Naive thymus-derived CD4-positive, alpha-beta T cell (primary cell): ENCODE measurements at regions of chr18 and their contacts with region 1.

Region 1: DNA sequence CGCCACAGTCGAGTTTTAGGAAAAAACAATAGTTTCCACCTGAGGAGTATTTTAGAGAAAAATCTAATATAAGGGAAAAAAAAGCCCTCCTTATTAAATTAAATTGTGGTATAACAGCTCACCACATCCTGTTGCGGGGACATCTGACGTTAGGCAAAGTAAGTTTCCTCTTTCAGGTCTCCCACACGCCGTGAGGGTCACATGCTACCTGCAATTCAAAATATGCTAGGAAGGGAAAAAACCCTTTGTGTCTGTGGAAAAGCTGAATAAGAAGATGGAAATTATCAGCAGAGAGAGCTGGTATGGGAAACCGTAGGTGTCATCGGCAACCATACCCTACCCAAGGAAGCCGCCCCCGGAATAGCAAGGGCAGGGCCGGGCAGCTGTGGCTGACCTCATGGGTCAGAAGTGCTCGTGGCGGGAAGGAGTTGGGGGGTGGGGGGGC is 128.0 kb downstream of the NFATC1 start:
- DNase-seq: peak; percentile 15 to 91 (median 88)
- ATAC-seq: peak; percentile 79
- H3K4me3 ChIP-seq: peak overlapping the region; percentile 56
- H3K4me3 Mint-ChIP-seq: peak overlapping the region; percentile 83 to 93 (median 90)
- H3K27ac ChIP-seq: peak overlapping the region; percentile 93
- H3K27ac Mint-ChIP-seq: peak overlapping the region; percentile 88 to 100 (median 98)
- H3K4me1 ChIP-seq: peaks cover 35 to 67% of the 10 kb centered on the region in 2 donors
- H3K4me1 Mint-ChIP-seq: peaks cover 48 to 94% (median 75%) of the 10 kb centered on the region in 7 donors
- H3K27me3 ChIP-seq: no peaks in the 10 kb centered on the region
- H3K27me3 Mint-ChIP-seq: no peaks in the 10 kb centered on the region

Region 2: DNA sequence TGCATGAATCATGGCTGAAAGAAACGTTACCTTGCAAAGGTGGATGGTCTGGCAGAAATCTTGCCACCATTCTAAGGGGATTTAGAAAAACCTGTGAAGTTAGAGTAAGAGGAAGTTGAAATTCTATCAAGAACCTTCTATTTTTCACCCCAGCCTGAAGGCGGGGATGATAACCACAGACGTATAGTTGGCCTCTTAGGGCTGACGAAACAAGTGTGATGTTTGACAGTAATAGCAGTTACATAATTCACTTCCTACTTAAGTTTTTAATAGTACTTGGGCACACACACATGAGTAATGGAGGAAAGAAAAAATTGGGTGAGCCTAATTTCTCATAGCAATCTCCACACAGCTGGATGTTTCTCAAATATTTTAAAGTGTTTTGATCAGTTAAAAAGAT is 880.8 kb before region 1 on chr18:
- CTCF ChIA-PET with region 1: no interaction called
- POLR2A ChIA-PET with region 1: no interaction called
- intact Hi-C with region 1: no loop called
- DNase-seq: peak in 5 of 9 donors; percentile 3 to 34 (median 12)
- ATAC-seq: peak; percentile 75
- H3K4me3 ChIP-seq: no peak overlapping the region
- H3K4me3 Mint-ChIP-seq: peak overlapping the region in 4 of 10 donors; percentile 27 to 72 (median 48)
- H3K27ac ChIP-seq: peak overlapping the region; percentile 39
- H3K27ac Mint-ChIP-seq: peak overlapping the region in 4 of 9 donors; percentile 25 to 75 (median 71)
- H3K4me1 ChIP-seq: no peaks in the 10 kb centered on the region
- H3K4me1 Mint-ChIP-seq: peaks cover 0 to 22% (median 5%) of the 10 kb centered on the region in 7 donors
- H3K27me3 ChIP-seq: no peaks in the 10 kb centered on the region
- H3K27me3 Mint-ChIP-seq: no peaks in the 10 kb centered on the region

Region 3: DNA sequence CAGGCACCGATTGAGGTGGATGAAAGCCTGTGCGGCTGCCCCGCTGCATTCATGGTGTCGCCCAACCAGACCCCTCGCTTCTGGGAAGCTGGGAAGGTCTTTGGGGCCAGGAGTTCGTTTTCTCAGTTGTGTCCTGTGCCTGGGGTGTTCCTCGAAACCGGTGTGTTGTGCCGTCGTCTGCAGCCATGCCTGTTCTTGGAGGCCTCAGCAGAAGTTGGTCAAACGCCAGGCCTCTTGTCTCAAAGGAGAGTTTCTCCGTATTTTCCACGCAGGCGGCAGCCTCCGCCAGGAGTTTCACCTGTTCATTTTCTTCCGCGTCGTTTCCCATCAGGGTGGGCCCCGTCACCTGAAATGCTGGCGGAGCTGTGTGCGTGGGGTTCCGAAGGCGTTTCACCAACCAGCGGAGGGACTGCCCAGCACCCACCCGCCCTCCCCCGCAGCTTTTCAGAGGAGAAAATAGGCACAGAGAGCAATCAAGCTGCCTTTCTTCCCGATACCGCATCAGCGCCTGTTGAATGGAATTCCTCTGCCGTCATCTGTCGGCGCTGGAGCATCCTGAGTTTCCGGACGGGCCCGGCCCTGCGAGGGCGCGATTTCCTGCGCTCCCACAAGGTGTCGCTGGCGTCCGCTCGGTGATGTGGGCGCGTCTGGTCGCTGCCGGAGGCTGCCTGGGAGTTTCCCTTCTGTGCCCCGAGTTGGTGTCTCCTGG is 145.1 kb before region 1 on chr18:
- CTCF ChIA-PET with region 1: interaction called, 60 read pairs
- POLR2A ChIA-PET with region 1: no interaction called
- intact Hi-C with region 1: loop called (anchors 1 kb)
- DNase-seq: peak; percentile 67 to 87 (median 78)
- ATAC-seq: peak; percentile 95
- H3K4me3 ChIP-seq: no peak overlapping the region
- H3K4me3 Mint-ChIP-seq: peak overlapping the region in 2 of 10 donors; percentile 11 to 50
- H3K27ac ChIP-seq: no peak overlapping the region
- H3K27ac Mint-ChIP-seq: peak overlapping the region in 7 of 9 donors; percentile 18 to 77 (median 63)
- H3K4me1 ChIP-seq: peaks cover 6 to 7% of the 10 kb centered on the region in 2 donors
- H3K4me1 Mint-ChIP-seq: peaks cover 4 to 9% (median 9%) of the 10 kb centered on the region in 7 donors
- H3K27me3 ChIP-seq: no peaks in the 10 kb centered on the region
- H3K27me3 Mint-ChIP-seq: no peaks in the 10 kb centered on the region

Region 4: DNA sequence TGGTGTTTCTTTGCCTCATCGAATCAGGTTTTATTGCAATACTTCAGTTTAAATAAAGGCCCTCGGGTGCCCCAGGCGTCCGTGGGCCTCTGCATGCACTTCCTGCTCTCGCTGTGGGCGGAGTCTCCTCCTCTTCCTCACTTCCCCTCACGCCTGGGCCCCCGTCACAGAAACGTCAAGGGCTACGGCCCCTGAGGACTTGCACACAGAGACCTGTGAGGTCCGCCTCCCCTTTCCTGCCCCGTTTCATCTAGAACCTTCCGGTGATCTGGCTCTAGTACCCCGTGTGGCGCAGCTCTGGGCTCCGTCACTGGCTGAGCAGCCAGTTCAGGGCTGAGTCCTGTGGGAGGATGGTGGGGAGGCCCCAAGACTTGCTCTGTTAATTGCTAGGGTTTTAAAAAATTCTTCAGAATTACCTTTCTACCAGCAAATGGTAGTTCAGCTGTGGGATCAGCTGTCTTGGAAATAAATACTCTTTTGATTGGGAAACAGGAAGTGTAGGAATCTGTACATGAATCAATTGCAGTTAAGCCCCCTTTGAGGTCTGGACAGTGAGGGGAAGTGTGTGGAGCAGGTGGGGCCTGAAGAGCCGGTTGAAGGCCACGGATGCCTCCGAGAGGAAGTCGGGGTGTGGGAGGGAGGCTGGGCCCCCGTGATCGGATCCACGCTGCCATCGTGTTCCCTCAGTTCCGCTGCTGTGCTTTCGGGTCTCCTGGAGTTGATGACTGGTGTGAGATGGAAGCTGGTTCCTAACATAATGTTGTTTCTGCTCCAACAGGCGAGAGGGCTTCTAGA is 117.8 kb before region 1 on chr18:
- CTCF ChIA-PET with region 1: interaction called, 10 read pairs
- POLR2A ChIA-PET with region 1: interaction called, 62 read pairs
- intact Hi-C with region 1: loop called (anchors 1 to 2 kb)
- DNase-seq: peak; percentile 68 to 97 (median 92)
- ATAC-seq: peak; percentile 91
- H3K4me3 ChIP-seq: peak overlapping the region; percentile 45
- H3K4me3 Mint-ChIP-seq: peak overlapping the region; percentile 89 to 98 (median 92)
- H3K27ac ChIP-seq: peak overlapping the region; percentile 92
- H3K27ac Mint-ChIP-seq: peak overlapping the region; percentile 96 to 100 (median 99)
- H3K4me1 ChIP-seq: peaks cover 34 to 54% of the 10 kb centered on the region in 2 donors
- H3K4me1 Mint-ChIP-seq: peaks cover 42 to 70% (median 54%) of the 10 kb centered on the region in 7 donors
- H3K27me3 ChIP-seq: no peaks in the 10 kb centered on the region
- H3K27me3 Mint-ChIP-seq: no peaks in the 10 kb centered on the region

Region 5: DNA sequence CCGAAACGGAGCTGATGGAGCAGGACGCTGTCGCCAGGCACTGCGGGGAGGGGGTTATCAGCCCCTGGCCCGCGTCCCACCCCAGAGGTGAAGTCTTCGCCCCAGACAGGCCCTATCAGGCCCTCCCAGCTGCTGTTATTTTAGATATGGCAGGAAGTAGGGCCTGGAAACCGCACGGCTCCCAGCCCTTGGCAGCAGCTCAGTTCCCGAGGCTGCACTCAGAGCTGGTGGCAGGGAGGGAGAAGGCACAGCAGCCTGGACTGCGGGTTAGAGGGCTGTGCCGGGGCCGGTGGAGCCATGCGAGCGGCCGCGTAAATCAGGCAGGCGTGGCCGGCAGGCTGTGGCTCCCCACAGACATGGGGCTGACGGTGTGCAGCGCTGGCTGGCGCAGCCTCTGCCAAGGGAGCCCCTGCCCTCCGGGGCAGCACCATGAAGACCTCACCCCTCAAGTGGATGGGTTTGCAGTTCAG is 16.6 kb before region 1 on chr18:
- CTCF ChIA-PET with region 1: interaction called, 5 read pairs
- POLR2A ChIA-PET with region 1: interaction called, 33 read pairs
- intact Hi-C with region 1: loop called (anchors 1 kb)
- DNase-seq: peak in 7 of 9 donors; percentile 22 to 51 (median 47)
- ATAC-seq: peak; percentile 63
- H3K4me3 ChIP-seq: peak overlapping the region; percentile 53
- H3K4me3 Mint-ChIP-seq: peak overlapping the region; percentile 74 to 86 (median 80)
- H3K27ac ChIP-seq: peak overlapping the region; percentile 69
- H3K27ac Mint-ChIP-seq: peak overlapping the region; percentile 83 to 97 (median 95)
- H3K4me1 ChIP-seq: peaks cover 7 to 42% of the 10 kb centered on the region in 2 donors
- H3K4me1 Mint-ChIP-seq: peaks cover 42 to 72% (median 58%) of the 10 kb centered on the region in 7 donors
- H3K27me3 ChIP-seq: no peaks in the 10 kb centered on the region
- H3K27me3 Mint-ChIP-seq: no peaks in the 10 kb centered on the region

Region 6: GRCh38 chr18:79738581-79739439 is 215.1 kb after region 1 on chr18:
- CTCF ChIA-PET with region 1: no interaction called
- POLR2A ChIA-PET with region 1: no interaction called
- intact Hi-C with region 1: no loop called
- DNase-seq: no peak
- ATAC-seq: no peak
- H3K4me3 ChIP-seq: no peak overlapping the region
- H3K4me3 Mint-ChIP-seq: no peak overlapping the region
- H3K27ac ChIP-seq: no peak overlapping the region
- H3K27ac Mint-ChIP-seq: peak overlapping the region in 2 of 9 donors; percentile 25 to 38
- H3K4me1 ChIP-seq: no peaks in the 10 kb centered on the region
- H3K4me1 Mint-ChIP-seq: peaks cover 0 to 4% (median 0%) of the 10 kb centered on the region in 7 donors
- H3K27me3 ChIP-seq: no peaks in the 10 kb centered on the region
- H3K27me3 Mint-ChIP-seq: no peaks in the 10 kb centered on the region

Region 7: GRCh38 chr18:79988451-79989194 is 464.9 kb after region 1 on chr18 and contains the start of gene TXNL4A:
- CTCF ChIA-PET with region 1: no interaction called
- POLR2A ChIA-PET with region 1: no interaction called
- intact Hi-C with region 1: loop called (anchors 2 to 5 kb)
- DNase-seq: peak; percentile 76 to 88 (median 84)
- ATAC-seq: peak; percentile 97
- H3K4me3 ChIP-seq: peak within 1 kb of the TSS; percentile 94
- H3K4me3 Mint-ChIP-seq: peak within 1 kb of the TSS; percentile 80 to 97 (median 92)
- H3K27ac ChIP-seq: peak within 1 kb of the TSS; percentile 93
- H3K27ac Mint-ChIP-seq: peak within 1 kb of the TSS; percentile 85 to 98 (median 95)
- H3K4me1 ChIP-seq: peaks cover 20 to 27% of the 10 kb centered on the region in 2 donors
- H3K4me1 Mint-ChIP-seq: peaks cover 30 to 45% (median 38%) of the 10 kb centered on the region in 7 donors
- H3K27me3 ChIP-seq: no peaks in the 10 kb centered on the region
- H3K27me3 Mint-ChIP-seq: peaks cover 0 to 5% (median 0%) of the 10 kb centered on the region in 5 donors
- total RNA-seq, gene TXNL4A: 56.9 to 107 (median 69.7) TPM